PC-9 (cell line): ENCODE measurements at regions of chr4 and their contacts with region 1.

Region 1: DNA sequence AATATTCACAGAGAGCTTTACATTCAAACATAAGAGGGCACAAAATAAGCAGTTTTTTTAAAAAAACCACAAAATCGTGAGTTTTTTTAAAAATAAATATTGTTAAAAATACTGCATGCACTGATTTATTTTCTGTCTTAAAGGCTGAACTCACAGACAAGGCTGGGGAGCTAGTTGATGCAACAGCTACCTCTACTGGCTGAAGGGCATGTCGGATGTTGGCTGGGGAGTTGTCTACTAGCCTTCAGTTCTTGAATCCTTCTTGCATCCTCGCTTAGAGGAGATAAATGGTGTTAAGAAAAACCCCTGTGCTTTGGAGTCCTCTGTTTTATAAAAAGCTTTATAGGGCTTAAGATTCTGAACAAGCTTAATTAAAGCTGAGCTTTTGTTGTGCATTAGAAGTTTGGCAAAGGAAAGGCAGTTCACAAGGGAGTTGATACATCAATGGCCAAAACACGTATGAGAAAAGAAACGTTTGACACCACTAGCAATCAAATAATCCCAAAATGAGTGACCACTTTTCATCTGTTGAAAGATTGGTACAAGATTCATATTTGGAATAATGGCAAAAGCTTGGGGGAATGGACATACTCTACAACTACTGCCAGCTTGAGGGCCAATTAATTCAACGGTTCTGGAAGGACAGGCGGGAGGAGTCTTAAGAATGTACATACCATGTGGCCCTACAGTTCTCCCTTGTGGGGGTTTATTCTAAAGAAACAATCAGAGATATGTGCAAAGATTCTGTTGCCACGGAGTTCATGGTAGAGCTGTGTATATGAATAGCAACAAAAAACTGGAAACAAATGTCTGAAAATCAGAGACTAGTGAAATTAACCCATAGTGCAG is 94.7 kb downstream of the SEL1L3 start:
- DNase-seq: peak in 1 of 2 experiments; percentile 37
- H3K4me3 ChIP-seq: no peak overlapping the region
- H3K27ac ChIP-seq: no peak overlapping the region
- H3K4me1 ChIP-seq: no peaks in the 10 kb centered on the region
- H3K27me3 ChIP-seq: no peaks in the 10 kb centered on the region
- CTCF ChIP-seq: peak; percentile 66

Region 2: DNA sequence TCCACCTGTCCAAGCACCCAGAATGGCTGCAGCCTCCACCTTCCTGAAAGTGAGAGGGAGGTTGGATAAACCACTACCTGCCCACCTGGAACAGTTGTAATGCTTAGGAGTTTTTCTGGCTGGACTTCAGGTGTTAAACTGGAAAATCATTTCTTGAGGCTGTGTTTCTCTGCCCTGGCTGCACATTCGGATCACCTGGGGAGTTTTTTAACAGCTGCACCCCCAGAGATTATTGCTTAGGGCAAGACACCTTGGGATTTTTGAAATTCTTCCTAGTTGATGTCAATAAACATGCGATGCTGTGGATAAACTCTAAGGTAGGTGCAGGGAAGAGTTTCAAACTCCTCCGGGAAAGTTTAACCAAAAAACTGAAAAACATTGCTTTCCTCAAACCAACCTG is 565.7 kb before region 1 on chr4:
- CTCF ChIA-PET with region 1: no interaction called
- POLR2A ChIA-PET with region 1: no interaction called
- intact Hi-C with region 1: no loop called
- DNase-seq: no peak
- H3K4me3 ChIP-seq: no peak overlapping the region
- H3K27ac ChIP-seq: no peak overlapping the region
- H3K4me1 ChIP-seq: no peaks in the 10 kb centered on the region
- H3K27me3 ChIP-seq: no peaks in the 10 kb centered on the region
- CTCF ChIP-seq: no peak

Region 3: GRCh38 chr4:25439918-25440477 is 328.1 kb before region 1 on chr4:
- CTCF ChIA-PET with region 1: interaction called, 9 read pairs
- POLR2A ChIA-PET with region 1: no interaction called
- intact Hi-C with region 1: loop called (anchors 1 kb)
- DNase-seq: peak in 1 of 2 experiments; percentile 45
- H3K4me3 ChIP-seq: no peak overlapping the region
- H3K27ac ChIP-seq: no peak overlapping the region
- H3K4me1 ChIP-seq: no peaks in the 10 kb centered on the region
- H3K27me3 ChIP-seq: no peaks in the 10 kb centered on the region
- CTCF ChIP-seq: peak; percentile 87

Region 4: DNA sequence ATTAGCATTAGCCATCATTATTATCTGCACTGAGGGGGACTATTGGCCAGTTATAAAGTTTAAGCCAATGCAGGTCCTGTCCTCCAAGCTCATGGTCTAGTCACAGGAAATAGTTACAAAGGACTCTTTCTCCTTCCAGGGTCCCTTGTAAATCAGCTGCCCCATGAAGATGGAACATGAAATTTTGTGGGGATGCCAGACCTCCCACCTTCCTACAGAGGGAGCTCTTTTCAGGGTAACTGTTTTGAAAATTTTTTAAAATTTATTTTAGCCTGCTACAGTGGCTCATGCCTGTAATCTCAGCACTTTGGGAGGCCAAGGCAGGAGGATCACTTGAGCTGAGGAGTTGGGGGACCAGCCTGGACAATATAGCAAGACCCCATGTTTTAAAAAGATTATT is 236.8 kb before region 1 on chr4:
- CTCF ChIA-PET with region 1: no interaction called
- POLR2A ChIA-PET with region 1: no interaction called
- intact Hi-C with region 1: loop called (anchors 10 kb)
- DNase-seq: no peak
- H3K4me3 ChIP-seq: no peak overlapping the region
- H3K27ac ChIP-seq: no peak overlapping the region
- H3K4me1 ChIP-seq: no peaks in the 10 kb centered on the region
- H3K27me3 ChIP-seq: no peaks in the 10 kb centered on the region
- CTCF ChIP-seq: peak; percentile 63

Region 5: DNA sequence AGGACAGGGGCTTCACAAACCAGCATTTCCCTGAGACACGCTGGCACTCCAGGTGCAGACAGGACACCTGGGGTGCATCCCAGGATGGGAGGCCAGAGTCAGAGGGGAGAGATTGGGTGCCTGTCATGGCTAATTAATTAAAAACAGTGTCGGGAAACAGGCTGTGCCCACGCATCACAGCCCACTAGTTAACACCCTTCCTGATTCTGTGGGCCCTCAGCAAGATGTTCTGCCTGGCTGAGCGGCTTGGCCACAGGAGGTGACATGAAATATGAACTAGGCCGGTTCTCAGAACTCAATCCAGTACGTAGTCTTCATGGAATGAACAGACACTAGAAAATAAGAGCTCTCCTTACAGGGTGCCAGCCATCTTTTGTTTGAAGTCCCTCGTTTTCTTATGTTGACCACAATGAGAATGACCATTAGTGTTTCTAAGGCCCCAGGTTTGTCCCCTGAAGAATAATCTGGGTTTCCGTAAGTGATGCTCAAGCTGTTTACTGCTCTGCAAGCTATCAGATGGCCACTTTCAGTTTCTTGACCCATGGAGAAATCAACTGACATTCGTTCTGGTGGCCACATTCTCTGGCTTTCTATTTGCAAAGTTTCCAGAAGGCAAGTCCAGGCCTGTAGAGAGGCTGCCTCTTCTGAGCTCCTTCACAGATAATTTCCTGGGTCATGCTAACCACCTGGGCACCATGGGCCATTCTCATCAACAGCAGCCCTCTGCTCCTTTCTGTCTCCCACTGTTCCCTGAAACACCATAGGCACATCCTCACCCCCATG is 40.2 kb before region 1 on chr4:
- CTCF ChIA-PET with region 1: no interaction called
- POLR2A ChIA-PET with region 1: no interaction called
- intact Hi-C with region 1: no loop called
- DNase-seq: no peak
- H3K4me3 ChIP-seq: no peak overlapping the region
- H3K27ac ChIP-seq: no peak overlapping the region
- H3K4me1 ChIP-seq: no peaks in the 10 kb centered on the region
- H3K27me3 ChIP-seq: no peaks in the 10 kb centered on the region
- CTCF ChIP-seq: no peak

Region 6: DNA sequence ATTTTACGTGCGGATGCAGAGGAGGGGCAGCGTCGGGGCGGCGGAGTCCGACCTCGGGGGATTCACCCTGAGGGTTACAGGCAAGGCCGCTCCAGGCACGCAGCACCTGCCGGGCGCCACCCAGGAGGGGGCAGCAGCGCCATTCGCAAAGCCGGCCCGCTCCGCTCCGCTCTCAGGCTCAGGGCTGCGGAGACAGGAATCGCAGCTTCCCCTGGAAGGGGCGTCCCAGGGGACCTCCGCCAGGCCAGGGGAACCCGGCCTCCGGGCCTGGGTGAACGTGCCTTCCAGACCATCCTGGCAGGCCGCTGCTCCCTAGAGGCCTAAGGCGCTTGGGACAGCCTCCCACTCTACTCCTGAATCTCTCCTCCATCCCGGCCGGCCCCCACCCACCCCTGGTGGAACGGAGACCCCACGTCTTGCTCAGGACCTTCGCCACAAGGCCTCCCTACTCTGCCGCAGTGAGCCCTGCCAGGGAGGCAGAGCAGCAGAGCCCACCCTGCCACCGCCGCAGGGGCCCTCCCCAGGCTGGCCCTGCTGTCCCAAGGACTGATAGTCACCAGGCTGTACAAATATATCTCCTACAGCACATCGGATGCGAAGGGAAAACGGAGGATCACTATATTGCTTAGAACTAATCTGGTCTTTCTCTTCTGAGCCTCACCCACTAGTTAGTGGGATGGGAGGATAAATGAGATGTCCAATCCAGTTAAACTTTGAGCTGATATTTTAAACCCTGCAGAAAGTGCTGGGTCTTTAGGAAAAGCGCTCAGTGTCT is 260.9 kb after region 1 on chr4:
- CTCF ChIA-PET with region 1: no interaction called
- POLR2A ChIA-PET with region 1: no interaction called
- intact Hi-C with region 1: no loop called
- DNase-seq: peak in 1 of 2 experiments; percentile 24
- H3K4me3 ChIP-seq: no peak overlapping the region
- H3K27ac ChIP-seq: no peak overlapping the region
- H3K4me1 ChIP-seq: peaks cover 8% of the 10 kb centered on the region; the same call in 1 of the 2 replicates
- H3K27me3 ChIP-seq: no peaks in the 10 kb centered on the region
- CTCF ChIP-seq: peak; percentile 37; the same call in 1 of the 2 replicates

Region 7: GRCh38 chr4:26206339-26206738 is 438.2 kb after region 1 on chr4:
- CTCF ChIA-PET with region 1: no interaction called
- POLR2A ChIA-PET with region 1: no interaction called
- intact Hi-C with region 1: no loop called
- DNase-seq: no peak
- H3K4me3 ChIP-seq: no peak overlapping the region
- H3K27ac ChIP-seq: no peak overlapping the region
- H3K4me1 ChIP-seq: peaks cover 2% of the 10 kb centered on the region; the same call in 1 of the 2 replicates
- H3K27me3 ChIP-seq: no peaks in the 10 kb centered on the region
- CTCF ChIP-seq: no peak